ENCODE measurements at regions of chr2 and their contacts with region 1.

Region 1: GRCh38 chr2:64750817-64751285 is 97.1 kb upstream of the SERTAD2 start:
- DNase-seq: peak in 41 of 42 donors; percentile 96 to 100 (median 99)

Region 2: DNA sequence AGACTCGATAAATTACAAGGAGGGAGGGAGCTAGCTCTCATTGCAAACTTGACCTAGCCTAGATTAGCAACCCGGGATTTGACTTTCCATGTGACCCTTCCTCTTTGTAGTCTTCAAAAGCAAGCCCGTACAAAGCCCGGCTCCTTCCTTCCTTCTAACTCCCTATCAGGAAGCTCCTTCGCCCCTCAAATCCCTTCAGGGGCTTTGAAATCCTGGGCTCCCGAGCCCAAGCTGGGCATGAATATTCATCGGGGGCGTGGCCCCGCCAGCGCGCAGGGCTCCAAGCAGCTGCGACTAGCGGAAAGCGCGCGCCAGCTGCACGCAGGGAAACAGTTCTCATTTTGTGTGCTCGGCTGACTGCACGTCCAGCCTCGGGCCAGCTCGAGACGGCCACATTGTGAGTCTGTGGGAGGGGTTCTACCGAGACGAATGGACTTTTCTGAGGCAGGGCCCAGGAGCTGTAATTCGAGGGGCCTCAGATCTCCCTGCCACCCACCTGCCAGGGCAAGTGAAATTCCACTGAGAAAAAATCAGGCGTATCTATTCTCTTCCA is 522.6 kb before region 1 on chr2:
- intact Hi-C with region 1: no loop called
- DNase-seq: peak; percentile 86 to 97 (median 93)

Region 3: DNA sequence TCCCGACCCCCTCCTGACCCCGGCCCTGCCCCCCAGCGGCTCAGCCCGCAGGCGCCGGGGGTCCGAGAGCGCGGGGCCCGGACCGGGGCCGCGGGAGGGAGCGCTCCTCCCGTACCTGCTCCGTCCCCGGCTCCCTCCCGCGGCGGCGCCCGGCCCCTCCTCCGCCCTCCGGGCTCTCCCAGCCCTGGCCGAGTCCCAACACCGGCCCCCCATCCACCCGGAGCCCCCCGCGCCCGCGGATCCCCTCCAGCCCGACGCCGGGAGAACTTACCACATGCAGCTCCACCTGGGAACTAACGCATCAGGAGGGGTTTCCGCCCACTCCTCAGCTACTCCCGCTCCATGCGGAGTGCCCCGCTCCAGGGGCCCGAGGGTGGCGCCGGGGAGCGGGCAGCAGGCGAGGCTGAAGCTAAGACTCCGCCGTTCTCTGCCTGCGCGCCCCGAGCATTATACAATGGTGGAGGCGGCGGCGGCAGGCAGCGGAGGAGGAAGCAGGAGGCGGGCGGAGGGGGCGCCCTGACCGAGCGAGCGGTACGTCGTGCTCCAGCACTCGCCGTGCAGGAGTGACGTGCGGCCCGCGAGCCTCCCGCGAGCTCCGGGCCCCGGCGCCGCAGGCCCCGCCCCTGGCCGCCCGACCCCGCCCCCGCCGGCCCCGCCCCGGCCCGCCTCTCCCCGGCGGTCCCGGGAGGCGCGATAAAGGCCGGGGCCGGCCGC is 97.3 kb before region 1 on chr2 and contains the start of gene SERTAD2:
- intact Hi-C with region 1: loop called (anchors 2 kb)
- DNase-seq: peak; percentile 57 to 93 (median 86)

Region 4: DNA sequence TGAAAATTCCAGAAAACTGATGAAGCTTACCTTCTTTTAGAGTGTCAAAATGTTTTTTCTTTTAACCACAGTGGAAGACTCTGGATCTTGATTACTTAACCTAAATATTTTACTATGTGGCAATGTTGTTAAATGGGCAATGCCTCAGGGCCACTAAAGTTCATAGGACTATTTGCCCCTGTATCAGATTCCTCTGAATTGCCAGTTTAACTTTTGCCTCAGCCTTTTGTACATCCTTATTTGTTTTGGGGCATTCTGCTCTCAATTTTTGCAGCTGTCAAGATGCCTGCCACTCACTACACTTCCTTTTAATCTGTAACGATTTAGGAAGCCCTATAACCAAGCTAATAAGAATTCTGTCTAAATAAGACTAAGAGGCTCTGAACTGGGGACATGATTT is 65.4 kb before region 1 on chr2:
- intact Hi-C with region 1: no loop called
- DNase-seq: no peak

Region 5: DNA sequence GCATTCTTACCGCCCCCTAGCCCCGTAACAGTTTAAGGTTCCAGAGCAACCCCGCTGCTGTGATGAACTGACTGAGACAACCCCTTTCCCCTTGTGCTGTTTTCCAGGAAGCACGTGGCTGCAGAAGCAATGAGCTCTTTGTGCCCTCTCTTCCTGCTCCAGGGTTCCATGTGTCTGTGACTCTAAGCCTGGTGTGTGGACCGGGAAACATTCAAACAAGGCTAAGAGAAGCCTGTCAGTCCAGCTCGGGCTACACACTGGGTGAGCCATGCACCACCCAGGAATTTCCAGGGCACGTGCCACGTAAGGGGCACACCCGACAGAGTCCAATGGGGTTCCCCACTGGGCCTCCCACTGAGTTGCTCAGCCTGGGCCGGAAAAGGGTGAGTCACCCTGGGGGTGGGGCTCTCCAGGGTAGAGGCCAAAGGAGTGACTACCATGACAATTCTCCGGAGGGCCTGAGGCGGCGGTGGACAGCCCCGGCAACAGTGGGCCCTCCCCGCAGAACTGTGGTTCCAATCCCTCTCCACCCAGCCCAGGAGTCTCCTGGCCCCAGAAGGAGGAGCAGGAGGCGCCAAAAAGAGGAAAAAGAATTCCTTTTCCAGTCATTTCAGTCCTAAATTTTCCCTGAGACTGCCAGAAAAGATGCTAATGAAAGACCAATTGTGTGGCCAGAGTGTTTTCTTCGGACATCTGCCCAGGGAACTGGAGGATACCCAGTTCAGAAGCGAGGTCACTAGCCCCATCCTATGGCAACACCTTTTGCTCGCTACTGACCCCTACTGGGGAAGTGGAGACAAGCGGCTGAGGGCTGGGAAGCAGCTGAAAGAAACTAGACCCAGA is 80.5 kb after region 1 on chr2:
- intact Hi-C with region 1: no loop called
- DNase-seq: peak; percentile 47 to 94 (median 81)

Region 6: DNA sequence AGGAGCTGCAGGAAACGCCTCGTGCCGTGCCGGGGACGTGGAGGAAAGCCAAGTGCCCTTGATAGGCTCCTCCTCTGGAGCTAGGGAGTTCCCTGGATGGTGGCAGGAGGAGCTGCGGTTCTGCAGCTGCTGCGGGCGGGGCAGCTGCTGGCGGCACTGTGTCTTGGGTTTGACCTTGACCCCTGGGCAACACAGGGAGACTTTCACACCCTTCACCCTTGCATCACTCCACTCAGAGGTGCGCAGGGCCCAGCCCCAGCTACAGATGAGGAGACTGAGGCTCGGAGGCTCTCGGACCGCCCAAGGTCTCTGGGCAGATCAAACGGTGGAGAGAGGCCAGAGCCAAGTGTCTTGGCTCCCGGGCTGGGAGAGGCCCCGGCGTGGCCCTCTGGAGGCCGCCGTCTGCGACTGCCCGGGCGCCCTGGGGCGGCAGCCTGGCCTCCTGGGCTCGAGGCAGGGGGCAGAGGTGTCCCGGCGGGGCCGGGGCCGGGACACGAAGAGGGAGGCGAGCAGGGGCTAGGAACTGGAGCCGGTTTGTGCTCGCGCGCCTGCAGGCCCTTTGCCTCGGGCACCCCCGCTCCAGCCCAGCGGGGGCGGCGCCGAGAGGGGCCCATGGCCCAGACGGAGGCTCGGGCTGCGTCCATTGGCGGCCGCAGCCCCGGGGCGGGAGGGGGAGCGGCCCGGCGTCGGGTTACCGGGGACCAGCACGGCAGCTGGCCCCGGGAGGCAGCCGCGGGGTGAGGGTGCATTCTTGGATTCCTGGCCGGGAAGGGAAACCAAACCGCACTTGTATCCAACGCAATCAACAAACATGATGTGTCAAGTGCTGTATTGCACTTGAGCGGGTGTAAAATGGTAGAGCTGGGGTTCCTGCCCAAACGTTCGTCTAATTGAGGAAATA is 108.7 kb after region 1 on chr2:
- intact Hi-C with region 1: loop called (anchors 2 kb)
- DNase-seq: peak; percentile 60 to 92 (median 80)